Endothelial cell of umbilical vein (primary cell): ENCODE measurements at regions of chr16 and their contacts with region 1.

Region 1: GRCh38 chr16:57863434-57864160 is 61.3 kb upstream of the KIFC3 start:
- DNase-seq: peak; percentile 76
- H3K4me3 ChIP-seq: no peak overlapping the region
- H3K27ac ChIP-seq: no peak overlapping the region
- H3K4me1 ChIP-seq: peaks cover 5% of the 10 kb centered on the region
- H3K27me3 ChIP-seq: peaks cover 0 to 2% of the 10 kb centered on the region in 2 experiments
- CTCF ChIP-seq: peak; percentile 37 to 56
- POLR2A ChIP-seq: no peak

Region 2: DNA sequence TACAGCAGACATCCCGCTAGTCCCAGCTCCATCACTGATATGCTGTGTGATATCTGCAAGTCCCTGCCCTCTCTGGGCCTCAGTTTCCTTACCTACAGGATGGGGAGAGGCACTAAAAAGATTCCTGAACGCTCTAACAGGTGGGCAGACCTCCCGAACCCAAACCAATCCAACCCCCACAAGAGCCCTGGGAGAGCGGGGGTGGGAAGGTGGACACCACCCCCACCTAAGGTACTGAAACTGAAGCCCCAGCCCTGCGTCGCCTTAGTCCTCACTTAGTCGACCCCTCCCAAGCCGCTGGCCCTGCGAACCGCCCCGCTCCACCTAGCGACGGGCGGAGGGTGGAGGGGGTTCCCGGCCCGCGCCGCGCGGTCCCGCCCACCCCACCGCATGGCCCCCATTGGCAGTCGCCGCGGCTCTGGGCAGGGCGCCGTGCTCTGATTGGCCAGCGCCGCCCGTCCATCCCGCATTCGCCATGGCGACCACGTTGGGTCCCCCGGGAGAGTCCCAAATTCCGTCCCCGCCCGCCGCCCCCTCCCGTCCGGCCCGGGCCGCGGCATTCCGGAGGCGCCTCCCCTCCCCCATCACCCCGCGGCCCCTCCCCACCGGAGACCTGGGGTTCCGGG is 327.8 kb before region 1 on chr16:
- CTCF ChIA-PET with region 1: no interaction called
- POLR2A ChIA-PET with region 1: no interaction called
- dilution Hi-C with region 1: no loop called
- intact Hi-C with region 1: no loop called
- DNase-seq: peak; percentile 87
- H3K4me3 ChIP-seq: peak overlapping the region; percentile 80 to 82 (median 80)
- H3K27ac ChIP-seq: peak overlapping the region; percentile 18
- H3K4me1 ChIP-seq: peaks cover 25% of the 10 kb centered on the region
- H3K27me3 ChIP-seq: peaks cover 3 to 24% of the 10 kb centered on the region in 2 experiments
- CTCF ChIP-seq: peak in 1 of 2 donors; percentile 16
- POLR2A ChIP-seq: no peak

Region 3: GRCh38 chr16:57734925-57735754 is 128.5 kb before region 1 on chr16:
- CTCF ChIA-PET with region 1: interaction called, 14 read pairs
- POLR2A ChIA-PET with region 1: no interaction called
- dilution Hi-C with region 1: no loop called
- intact Hi-C with region 1: no loop called
- DNase-seq: peak; percentile 100
- H3K4me3 ChIP-seq: peak overlapping the region; percentile 72 to 93 (median 74)
- H3K27ac ChIP-seq: peak overlapping the region; percentile 81
- H3K4me1 ChIP-seq: peaks cover 19% of the 10 kb centered on the region
- H3K27me3 ChIP-seq: no peaks in the 10 kb centered on the region
- CTCF ChIP-seq: no peak
- POLR2A ChIP-seq: peak; percentile 58

Region 4: DNA sequence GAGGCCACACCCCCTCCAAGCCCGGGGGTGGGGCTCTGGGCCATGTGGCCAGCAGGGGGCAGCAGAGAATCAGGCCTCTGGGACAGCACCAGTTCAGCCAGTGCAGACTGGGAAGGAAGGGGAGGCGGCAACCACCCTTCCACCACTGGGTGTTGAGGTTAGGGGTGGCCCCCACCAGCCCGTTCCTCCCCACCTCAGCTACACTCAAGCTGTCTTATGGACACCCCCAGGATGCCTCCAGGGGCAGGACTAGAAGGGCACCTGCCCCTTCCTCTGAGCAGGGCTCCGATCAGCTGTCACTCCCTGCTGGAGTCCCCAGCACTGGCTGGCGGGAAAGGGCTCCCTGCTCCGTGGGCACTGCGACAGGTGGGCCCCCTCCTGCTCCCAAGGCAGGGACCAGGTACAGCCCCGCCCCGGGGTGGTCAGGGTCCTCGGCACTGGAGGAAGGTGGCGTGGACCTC is 106.2 kb before region 1 on chr16:
- CTCF ChIA-PET with region 1: interaction called, 45 read pairs
- POLR2A ChIA-PET with region 1: no interaction called
- dilution Hi-C with region 1: no loop called
- intact Hi-C with region 1: loop called (anchors 1 kb)
- DNase-seq: peak; percentile 77
- H3K4me3 ChIP-seq: no peak overlapping the region
- H3K27ac ChIP-seq: no peak overlapping the region
- H3K4me1 ChIP-seq: no peaks in the 10 kb centered on the region
- H3K27me3 ChIP-seq: no peaks in the 10 kb centered on the region
- CTCF ChIP-seq: peak; percentile 96 to 98
- POLR2A ChIP-seq: no peak

Region 5: GRCh38 chr16:57795431-57795878 is 68.1 kb before region 1 on chr16:
- CTCF ChIA-PET with region 1: interaction called, 29 read pairs
- POLR2A ChIA-PET with region 1: no interaction called
- dilution Hi-C with region 1: no loop called
- intact Hi-C with region 1: loop called (anchors 1 kb)
- DNase-seq: peak; percentile 31
- H3K4me3 ChIP-seq: no peak overlapping the region
- H3K27ac ChIP-seq: no peak overlapping the region
- H3K4me1 ChIP-seq: peaks cover 12% of the 10 kb centered on the region
- H3K27me3 ChIP-seq: no peaks in the 10 kb centered on the region
- CTCF ChIP-seq: peak; percentile 19 to 45
- POLR2A ChIP-seq: no peak

Region 6: GRCh38 chr16:57802341-57803133 is 61.1 kb before region 1 on chr16 and contains the start of gene KIFC3:
- CTCF ChIA-PET with region 1: interaction called, 29 read pairs
- POLR2A ChIA-PET with region 1: interaction called, 3 read pairs
- dilution Hi-C with region 1: no loop called
- intact Hi-C with region 1: no loop called
- DNase-seq: peak; percentile 78
- H3K4me3 ChIP-seq: peak within 1 kb of the TSS; percentile 52 to 70 (median 68)
- H3K27ac ChIP-seq: peak within 1 kb of the TSS; percentile 84
- H3K4me1 ChIP-seq: peaks cover 25% of the 10 kb centered on the region
- H3K27me3 ChIP-seq: no peaks in the 10 kb centered on the region
- CTCF ChIP-seq: no peak
- POLR2A ChIP-seq: peak; percentile 63
- total RNA-seq, gene KIFC3: 56.7 and 62.2 TPM in 2 replicates

Region 7: DNA sequence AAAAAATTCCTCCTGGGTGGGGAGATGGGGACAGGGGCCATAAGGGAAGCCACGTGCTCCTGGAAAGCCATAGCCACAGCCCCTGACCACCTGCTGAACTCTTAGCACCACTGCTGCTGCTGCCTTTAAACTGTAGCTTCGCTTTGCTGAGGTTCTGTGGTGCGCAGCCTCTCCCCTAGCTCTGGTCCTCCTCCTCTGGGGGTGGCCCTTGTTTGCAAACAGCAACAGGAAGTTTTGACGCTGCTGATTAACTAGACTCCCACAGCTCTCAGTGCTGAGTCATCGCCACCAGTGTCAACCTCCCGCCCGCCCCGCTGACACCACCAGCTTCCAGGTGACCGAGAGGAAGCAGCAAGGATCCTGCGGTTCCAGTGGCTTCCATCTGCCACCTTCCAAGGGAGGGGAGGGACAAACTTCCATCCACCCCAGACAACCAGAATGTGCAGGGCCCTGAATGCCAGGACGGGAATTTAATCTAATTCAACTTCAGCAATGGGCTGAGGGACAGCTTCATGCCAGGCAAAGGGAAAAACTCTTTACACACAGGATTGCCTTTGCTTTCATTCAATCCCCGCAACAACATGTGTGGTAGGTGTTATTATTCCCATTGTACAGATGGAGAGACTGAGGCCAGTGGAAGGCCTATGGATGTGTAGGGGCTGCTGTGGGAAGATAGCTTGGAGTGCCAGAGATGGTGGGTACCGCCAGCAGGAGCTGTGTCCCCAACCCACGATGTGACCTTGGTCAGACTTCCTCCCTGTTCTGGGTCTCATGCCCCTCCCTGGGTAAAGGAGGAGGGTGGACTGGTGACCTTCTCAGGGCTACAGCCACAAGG is 53.2 kb before region 1 on chr16:
- CTCF ChIA-PET with region 1: interaction called, 13 read pairs
- POLR2A ChIA-PET with region 1: no interaction called
- dilution Hi-C with region 1: no loop called
- intact Hi-C with region 1: no loop called
- DNase-seq: peak; percentile 89
- H3K4me3 ChIP-seq: no peak overlapping the region
- H3K27ac ChIP-seq: peak overlapping the region; percentile 33
- H3K4me1 ChIP-seq: peaks cover 25% of the 10 kb centered on the region
- H3K27me3 ChIP-seq: no peaks in the 10 kb centered on the region
- CTCF ChIP-seq: no peak
- POLR2A ChIP-seq: no peak

Region 8: DNA sequence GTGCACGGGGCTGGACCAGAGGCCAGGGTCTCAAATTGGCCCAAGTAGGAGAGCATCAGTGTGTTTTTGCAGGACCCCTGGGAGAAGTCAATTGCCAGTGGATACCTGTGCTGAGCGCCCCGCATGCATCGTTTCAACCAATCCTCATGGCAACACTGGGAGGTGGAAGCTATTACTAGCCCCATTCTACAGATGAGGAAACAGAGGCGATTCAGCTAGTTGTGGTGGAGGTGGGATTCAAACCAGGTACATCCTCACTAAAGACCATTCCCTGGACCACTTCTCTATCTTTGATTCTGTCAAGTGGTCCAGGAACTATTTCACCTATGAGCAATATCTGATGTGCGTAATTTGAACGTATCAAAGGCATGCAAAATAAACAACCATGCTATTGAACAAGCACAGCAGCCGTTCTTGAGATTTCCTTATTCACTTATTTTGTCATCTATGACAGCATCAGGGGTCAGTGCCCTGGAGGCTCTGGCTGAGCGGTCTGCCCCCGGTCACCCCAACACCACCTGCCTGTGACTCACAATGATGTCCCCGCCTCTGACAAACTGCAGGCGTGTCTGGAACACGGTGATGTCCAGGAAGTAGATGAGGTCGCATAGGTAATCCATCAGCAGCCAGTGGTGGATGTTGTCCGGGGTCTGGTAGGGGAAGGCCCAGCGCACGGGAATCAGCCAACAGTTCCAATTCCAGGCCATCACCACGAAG is 53.3 kb after region 1 on chr16:
- CTCF ChIA-PET with region 1: no interaction called
- POLR2A ChIA-PET with region 1: no interaction called
- dilution Hi-C with region 1: no loop called
- intact Hi-C with region 1: no loop called
- DNase-seq: no peak
- H3K4me3 ChIP-seq: no peak overlapping the region
- H3K27ac ChIP-seq: no peak overlapping the region
- H3K4me1 ChIP-seq: no peaks in the 10 kb centered on the region
- H3K27me3 ChIP-seq: peaks cover 0 to 3% of the 10 kb centered on the region in 2 experiments
- CTCF ChIP-seq: no peak
- POLR2A ChIP-seq: no peak

Region 9: GRCh38 chr16:58000706-58001676 is 137.4 kb after region 1 on chr16 and contains the start of gene USB1:
- CTCF ChIA-PET with region 1: interaction called, 5 read pairs
- POLR2A ChIA-PET with region 1: no interaction called
- dilution Hi-C with region 1: no loop called
- intact Hi-C with region 1: loop called (anchors 1 kb)
- DNase-seq: peak; percentile 74
- H3K4me3 ChIP-seq: peak within 1 kb of the TSS; percentile 68 to 90 (median 85)
- H3K27ac ChIP-seq: peak within 1 kb of the TSS; percentile 19
- H3K4me1 ChIP-seq: peaks cover 17% of the 10 kb centered on the region
- H3K27me3 ChIP-seq: no peaks in the 10 kb centered on the region
- CTCF ChIP-seq: peak; percentile 63 to 73
- POLR2A ChIP-seq: peak; percentile 92
- total RNA-seq, gene USB1: 64.6 and 66.6 TPM in 2 replicates